Activated CD4-positive, alpha-beta memory T cell treated with anti-CD3 and anti-CD28 coated beads, Interleukin-2, amount 10 ng/mL, durations not matched to agents 7 days and 5 days (primary cell): ENCODE measurements at regions of chr1 and their contacts with region 1.

Region 1: DNA sequence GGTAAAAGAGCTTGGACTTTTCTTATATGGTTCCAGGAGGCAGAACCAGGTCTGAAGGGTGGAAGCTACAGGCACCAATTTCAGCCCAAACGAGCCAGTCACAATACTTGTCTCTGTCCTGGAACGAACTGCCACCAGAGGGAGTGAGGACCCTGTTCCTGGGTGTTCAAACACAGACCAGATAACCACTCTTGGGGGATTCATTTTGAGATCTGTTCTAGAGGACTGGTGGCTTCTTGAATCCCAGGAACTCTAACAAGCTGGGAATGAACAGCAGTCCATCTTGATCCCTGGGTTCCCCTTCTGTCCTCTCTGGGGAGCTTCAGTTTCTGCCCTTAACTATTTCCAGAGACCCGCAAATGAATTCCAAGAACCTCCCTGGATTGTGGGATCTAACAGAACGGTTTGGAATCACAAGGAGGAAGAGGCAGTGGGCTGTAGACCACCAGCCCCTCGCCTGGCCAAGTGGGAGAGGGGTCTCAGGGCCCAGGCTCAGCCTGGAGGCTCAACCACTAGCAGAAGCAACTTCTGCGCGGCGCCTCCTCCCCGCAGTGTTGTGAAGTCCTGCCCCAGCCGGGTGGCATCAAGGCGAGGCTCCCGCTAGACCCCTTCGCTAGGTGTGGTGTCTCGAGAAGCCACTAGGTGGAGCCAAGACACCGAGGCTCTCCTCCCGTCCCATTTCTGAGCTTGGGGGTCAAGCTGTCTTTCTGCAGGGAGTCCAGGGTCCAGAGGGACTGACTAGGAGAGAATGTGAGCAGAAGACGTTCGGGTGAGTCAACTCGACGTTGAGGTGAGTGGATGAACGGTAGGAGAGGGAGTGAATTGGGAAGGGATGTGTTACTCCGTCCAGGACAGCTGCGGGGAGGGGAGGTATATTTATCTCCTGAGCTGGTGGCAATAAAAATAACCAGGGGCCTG is 12.1 kb upstream of the NES start:
- DNase-seq: peak; percentile 76
- H3K4me3 Mint-ChIP-seq: no peak overlapping the region
- H3K27ac Mint-ChIP-seq: no peak overlapping the region
- H3K4me1 Mint-ChIP-seq: peaks cover 21% of the 10 kb centered on the region
- H3K27me3 Mint-ChIP-seq: peaks cover 65% of the 10 kb centered on the region

Region 2: GRCh38 chr1:156659994-156660751 is 29.1 kb before region 1 on chr1:
- CTCF ChIA-PET with region 1: interaction called, 139 read pairs
- POLR2A ChIA-PET with region 1: interaction called, 3 read pairs
- DNase-seq: peak; percentile 95
- H3K4me3 Mint-ChIP-seq: peak overlapping the region; percentile 83
- H3K27ac Mint-ChIP-seq: peak overlapping the region; percentile 86
- H3K4me1 Mint-ChIP-seq: peaks cover 72% of the 10 kb centered on the region
- H3K27me3 Mint-ChIP-seq: peaks cover 30% of the 10 kb centered on the region

Region 3: GRCh38 chr1:156677616-156678596 is 11.4 kb before region 1 on chr1:
- CTCF ChIA-PET with region 1: interaction called, 44 read pairs
- POLR2A ChIA-PET with region 1: interaction called, 3 read pairs
- DNase-seq: peak; percentile 35
- H3K4me3 Mint-ChIP-seq: no peak overlapping the region
- H3K27ac Mint-ChIP-seq: no peak overlapping the region
- H3K4me1 Mint-ChIP-seq: peaks cover 14% of the 10 kb centered on the region
- H3K27me3 Mint-ChIP-seq: peaks cover 76% of the 10 kb centered on the region

Region 4: DNA sequence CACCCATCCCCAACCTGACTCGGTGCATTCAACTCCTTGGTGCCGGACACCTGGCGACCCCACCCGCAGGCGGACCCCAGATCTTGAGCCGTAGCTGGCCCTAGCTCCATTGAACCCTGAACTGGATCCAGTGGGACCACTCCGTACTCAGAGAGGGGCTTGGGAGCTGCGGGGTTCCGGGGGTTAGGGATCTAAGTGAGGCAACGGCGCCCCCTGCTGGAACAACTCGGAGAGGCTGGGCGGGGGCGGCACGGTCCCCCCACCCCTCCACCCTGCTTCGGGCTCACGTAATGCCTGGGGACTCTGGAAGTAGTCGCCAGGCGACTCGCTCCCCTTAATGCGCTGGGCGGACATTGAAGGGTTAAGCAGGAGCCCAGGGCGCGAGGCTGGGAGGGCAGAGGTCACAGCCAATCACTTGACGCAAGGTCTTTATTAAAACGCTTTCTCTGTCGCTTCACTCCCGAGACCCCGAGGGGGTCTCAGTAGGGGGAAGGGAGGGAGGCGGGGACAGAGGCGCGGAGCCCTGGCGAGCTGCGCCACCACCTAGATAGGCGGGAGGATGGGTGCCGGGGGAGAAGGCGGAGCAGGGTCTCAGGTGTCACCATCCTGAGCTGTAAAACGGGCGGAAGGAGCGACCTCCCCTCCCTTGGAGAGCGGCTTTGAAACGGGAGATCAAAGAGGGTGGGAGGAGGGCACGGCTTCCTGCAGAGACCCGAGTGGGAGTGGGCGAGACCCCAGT is 16.8 kb after region 1 on chr1:
- CTCF ChIA-PET with region 1: interaction called, 109 read pairs
- POLR2A ChIA-PET with region 1: interaction called, 11 read pairs
- DNase-seq: peak; percentile 69
- H3K4me3 Mint-ChIP-seq: peak overlapping the region; percentile 70
- H3K27ac Mint-ChIP-seq: no peak overlapping the region
- H3K4me1 Mint-ChIP-seq: peaks cover 21% of the 10 kb centered on the region
- H3K27me3 Mint-ChIP-seq: peaks cover 38% of the 10 kb centered on the region

Region 5: GRCh38 chr1:156717275-156717805 is 28.0 kb after region 1 on chr1:
- CTCF ChIA-PET with region 1: interaction called, 27 read pairs
- POLR2A ChIA-PET with region 1: interaction called, 5 read pairs
- DNase-seq: no peak
- H3K4me3 Mint-ChIP-seq: no peak overlapping the region
- H3K27ac Mint-ChIP-seq: no peak overlapping the region
- H3K4me1 Mint-ChIP-seq: peaks cover 9% of the 10 kb centered on the region
- H3K27me3 Mint-ChIP-seq: no peaks in the 10 kb centered on the region